ENCODE measurements at regions of chrX and their contacts with region 1.

Region 1: DNA sequence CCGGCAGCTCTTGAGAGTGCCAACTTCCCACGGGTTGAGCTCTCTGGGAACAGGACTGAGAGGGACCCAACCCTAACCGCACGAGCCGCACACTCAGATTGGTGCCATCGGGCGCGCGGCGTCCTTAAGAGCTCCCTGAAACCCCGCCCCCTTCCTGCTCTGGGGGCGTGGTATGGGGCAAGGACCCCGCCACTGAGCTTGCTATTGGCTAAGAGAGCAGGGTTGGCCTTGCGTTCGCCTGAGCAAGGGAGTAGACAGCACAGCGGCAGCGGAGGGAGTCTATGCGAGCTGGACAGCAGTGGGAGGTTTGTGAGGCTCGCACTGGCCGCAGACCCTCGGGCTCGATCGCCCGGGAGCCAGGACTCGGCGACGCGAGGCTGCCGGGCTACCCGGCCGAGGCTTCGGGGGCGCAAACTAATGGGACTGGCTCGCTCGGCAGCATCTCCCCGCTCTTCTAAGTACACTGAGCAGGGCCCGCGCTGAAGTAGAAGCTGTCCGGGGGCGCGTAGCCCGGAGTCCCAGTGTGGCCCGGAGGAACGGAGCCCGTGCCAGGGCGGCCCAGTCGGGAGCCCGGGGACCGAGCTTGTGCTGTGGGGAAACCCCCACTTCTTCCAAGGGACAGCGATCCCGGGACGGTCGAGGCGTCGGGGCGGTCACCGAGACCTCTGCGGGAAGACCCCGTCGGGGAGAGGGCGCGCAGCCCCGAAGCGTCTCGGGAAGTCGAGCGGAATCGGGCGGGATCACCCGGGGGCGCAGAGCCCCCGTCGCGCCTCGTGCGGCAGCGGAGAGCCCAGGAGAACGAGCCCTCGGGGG is at the start of gene EFNB1:
- DNase-seq: peak; percentile 90 to 93 (median 92)
- H3K4me3 ChIP-seq: peak within 1 kb of the TSS; percentile 54
- H3K27ac ChIP-seq: peak within 1 kb of the TSS in 1 of 2 donors; percentile 55
- H3K4me1 ChIP-seq: no peaks in the 10 kb centered on the region
- H3K27me3 ChIP-seq: no peaks in the 10 kb centered on the region
- CTCF ChIP-seq: no peak
- EP300 ChIP-seq: no peak
- POLR2A ChIP-seq: peak; percentile 89
- total RNA-seq, gene EFNB1: 11.0 to 47.5 (median 26.2) TPM

Region 2: GRCh38 chrX:69060631-69061408 is 231.9 kb after region 1 on chrX:
- intact Hi-C with region 1: loop called in 2 of 4 experiments (anchors 2 to 5 kb)
- DNase-seq: peak in 4 of 5 donors; percentile 35 to 60 (median 50)
- H3K4me3 ChIP-seq: no peak overlapping the region
- H3K27ac ChIP-seq: no peak overlapping the region
- H3K4me1 ChIP-seq: no peaks in the 10 kb centered on the region
- H3K27me3 ChIP-seq: no peaks in the 10 kb centered on the region
- CTCF ChIP-seq: peak in 1 of 3 donors; percentile 13
- EP300 ChIP-seq: no peak
- POLR2A ChIP-seq: no peak

Region 3: DNA sequence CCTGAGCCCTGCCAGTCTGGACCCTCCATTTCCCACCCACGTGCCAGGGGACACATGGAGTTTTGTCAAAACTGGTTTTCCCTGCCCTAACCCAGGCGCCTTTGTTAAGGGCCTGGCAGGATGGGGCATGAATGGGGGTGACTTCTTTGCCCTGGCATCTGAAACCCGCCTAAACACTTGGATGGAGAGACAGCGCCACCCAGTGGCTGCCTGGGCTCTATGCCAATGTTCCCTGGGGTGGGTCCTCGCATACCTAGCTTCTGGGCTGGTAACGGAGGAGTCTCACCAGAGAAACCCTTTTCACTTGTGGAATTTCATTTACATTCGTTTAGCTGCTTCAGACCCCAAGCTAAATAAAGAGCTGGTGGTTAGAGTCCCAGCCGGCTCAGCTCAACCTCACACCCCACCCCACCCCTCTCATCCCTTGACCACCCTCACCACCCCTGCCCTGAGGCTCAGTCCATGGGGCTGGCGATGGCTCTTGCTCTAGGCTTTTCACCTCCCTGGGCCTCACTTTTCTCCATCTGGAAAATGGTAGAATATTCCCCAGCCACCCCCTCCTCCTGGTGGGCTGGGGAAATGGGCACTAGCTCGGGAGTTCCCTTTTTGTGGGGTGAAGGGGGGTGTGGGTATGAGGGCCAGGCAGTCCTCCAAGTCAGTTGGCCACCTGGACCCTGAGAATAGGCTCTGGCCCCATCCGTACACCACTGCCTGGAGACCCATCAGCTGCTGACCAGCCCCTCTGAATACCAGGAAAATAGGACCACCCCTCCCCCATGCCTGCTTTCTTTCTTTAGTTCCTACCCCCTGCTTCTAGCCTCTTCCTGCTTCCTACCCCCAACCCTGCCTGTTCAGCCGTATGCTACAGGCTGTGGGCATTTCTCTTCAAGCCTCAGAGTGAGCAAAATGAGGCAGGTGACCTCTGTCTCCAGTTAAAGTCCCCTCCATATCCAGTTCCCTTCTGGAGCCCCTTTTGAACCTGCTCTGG is 393.5 kb after region 1 on chrX:
- intact Hi-C with region 1: loop called (anchors 2 to 5 kb)
- DNase-seq: peak; percentile 65 to 82 (median 80)
- H3K4me3 ChIP-seq: no peak overlapping the region
- H3K27ac ChIP-seq: no peak overlapping the region
- H3K4me1 ChIP-seq: no peaks in the 10 kb centered on the region
- H3K27me3 ChIP-seq: no peaks in the 10 kb centered on the region
- CTCF ChIP-seq: peak; percentile 34 to 67 (median 54)
- EP300 ChIP-seq: no peak
- POLR2A ChIP-seq: no peak

Region 4: DNA sequence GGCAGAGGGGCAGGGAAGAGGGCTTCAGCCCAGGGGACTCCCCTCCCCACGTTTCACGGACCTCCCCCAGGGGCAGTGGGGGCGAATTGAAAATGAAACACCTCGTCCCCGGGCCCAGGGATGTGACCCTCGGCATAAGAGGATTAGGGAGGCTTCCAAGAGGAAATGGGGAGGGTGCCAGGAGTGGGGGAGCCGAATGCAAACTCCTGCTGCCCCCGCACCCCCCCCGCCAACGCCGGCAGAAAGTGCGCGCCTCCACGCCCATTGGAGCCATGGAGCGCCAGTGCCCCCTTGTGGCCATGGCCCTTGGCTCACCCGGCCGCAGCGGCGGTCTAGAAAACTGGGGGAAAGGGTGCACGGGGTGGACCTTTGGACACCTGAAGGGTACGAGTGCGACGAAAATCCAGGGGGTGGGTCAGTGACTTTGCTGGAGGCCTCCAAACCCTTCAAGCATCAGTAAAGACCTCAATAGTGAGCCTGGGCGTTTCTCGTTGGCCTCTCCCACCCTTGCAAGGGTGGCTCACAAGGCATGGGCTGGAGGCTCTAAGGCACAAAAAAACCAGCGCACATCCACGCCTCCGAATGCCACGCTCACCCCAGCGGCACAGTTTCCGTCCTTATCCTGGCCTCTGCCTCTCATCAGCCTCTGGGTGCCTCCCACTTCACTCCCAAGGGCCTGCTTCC is 457.1 kb after region 1 on chrX:
- intact Hi-C with region 1: loop called (anchors 2 to 10 kb)
- DNase-seq: peak; percentile 81 to 89 (median 88)
- H3K4me3 ChIP-seq: peak overlapping the region; percentile 38
- H3K27ac ChIP-seq: peak overlapping the region; percentile 62 to 72
- H3K4me1 ChIP-seq: peaks cover 2% of the 10 kb centered on the region
- H3K27me3 ChIP-seq: no peaks in the 10 kb centered on the region
- CTCF ChIP-seq: peak; percentile 72 to 88 (median 85)
- EP300 ChIP-seq: no peak
- POLR2A ChIP-seq: no peak

Measured in ovary (tissue), 10 donors.